ENCODE measurements at regions of chr22 and their contacts with region 1.

Region 1: DNA sequence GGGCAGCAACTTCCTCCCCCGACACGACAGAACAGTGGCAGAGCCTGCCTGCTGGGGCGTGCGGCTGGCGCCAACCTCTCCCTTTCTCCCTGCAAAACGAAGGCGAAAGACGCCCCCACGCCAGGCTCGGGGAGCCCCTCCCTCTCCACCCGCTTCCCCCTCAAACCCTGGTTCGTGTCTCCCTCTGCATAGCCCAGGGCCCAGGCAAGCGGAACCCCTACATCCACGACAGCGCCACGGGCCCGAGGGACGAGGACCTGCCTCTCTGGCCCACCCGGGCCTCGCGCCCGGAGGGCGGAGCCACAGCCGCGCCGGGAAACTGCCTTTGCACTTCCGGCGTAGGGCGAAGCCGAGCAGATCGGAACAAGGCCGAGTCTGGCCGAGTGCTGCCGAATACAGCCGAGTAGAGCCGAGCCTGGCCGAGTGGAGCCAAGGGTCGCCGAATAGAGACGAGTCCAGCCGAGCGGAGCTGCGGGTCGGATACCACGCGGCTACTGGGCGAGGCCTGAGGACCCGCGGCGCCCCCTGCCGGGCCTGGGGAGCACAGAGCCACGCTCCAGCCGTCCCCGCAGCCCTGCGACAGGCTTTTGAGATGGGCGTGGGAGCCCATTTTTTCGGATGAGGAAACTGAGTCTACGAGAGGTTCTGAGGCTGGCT is 11.2 kb upstream of the C1QTNF6 start:
- DNase-seq: peak; percentile 96 to 100 (median 99)
- ATAC-seq: peak; percentile 92
- H3K4me3 ChIP-seq: peak overlapping the region; percentile 57 to 73
- H3K4me3 Mint-ChIP-seq: peak overlapping the region; percentile 85
- H3K27ac ChIP-seq: peak overlapping the region; percentile 67 to 95
- H3K27ac Mint-ChIP-seq: peak overlapping the region; percentile 95
- H3K4me1 ChIP-seq: peaks cover 61% of the 10 kb centered on the region
- H3K4me1 Mint-ChIP-seq: peaks cover 70% of the 10 kb centered on the region
- H3K27me3 ChIP-seq: no peaks in the 10 kb centered on the region
- H3K27me3 Mint-ChIP-seq: no peaks in the 10 kb centered on the region
- CTCF ChIP-seq: peak; percentile 87

Region 2: GRCh38 chr22:36775964-36776669 is 423.1 kb before region 1 on chr22 and contains the start of gene IFT27:
- CTCF ChIA-PET with region 1: interaction called, 3 read pairs
- POLR2A ChIA-PET with region 1: no interaction called
- intact Hi-C with region 1: loop called in 1 of 2 experiments (anchors 2 kb)
- DNase-seq: peak; percentile 89 to 100 (median 95)
- ATAC-seq: peak; percentile 84
- H3K4me3 ChIP-seq: peak within 1 kb of the TSS; percentile 72 to 73
- H3K4me3 Mint-ChIP-seq: peak within 1 kb of the TSS; percentile 93
- H3K27ac ChIP-seq: peak within 1 kb of the TSS; percentile 89 to 92
- H3K27ac Mint-ChIP-seq: peak within 1 kb of the TSS; percentile 94
- H3K4me1 ChIP-seq: peaks cover 14% of the 10 kb centered on the region
- H3K4me1 Mint-ChIP-seq: peaks cover 29% of the 10 kb centered on the region
- H3K27me3 ChIP-seq: no peaks in the 10 kb centered on the region
- H3K27me3 Mint-ChIP-seq: no peaks in the 10 kb centered on the region
- CTCF ChIP-seq: no peak
- total RNA-seq, gene IFT27: 9.2 to 9.9 TPM

Region 3: GRCh38 chr22:36977947-36978660 is 221.1 kb before region 1 on chr22:
- CTCF ChIA-PET with region 1: interaction called, 9 read pairs
- POLR2A ChIA-PET with region 1: no interaction called
- intact Hi-C with region 1: loop called (anchors 1 to 5 kb)
- DNase-seq: peak; percentile 78 to 95 (median 91)
- ATAC-seq: peak; percentile 90
- H3K4me3 ChIP-seq: peak overlapping the region; percentile 50 to 70
- H3K4me3 Mint-ChIP-seq: peak overlapping the region; percentile 97
- H3K27ac ChIP-seq: peak overlapping the region; percentile 64 to 70
- H3K27ac Mint-ChIP-seq: peak overlapping the region; percentile 95
- H3K4me1 ChIP-seq: peaks cover 4% of the 10 kb centered on the region
- H3K4me1 Mint-ChIP-seq: peaks cover 6% of the 10 kb centered on the region
- H3K27me3 ChIP-seq: no peaks in the 10 kb centered on the region
- H3K27me3 Mint-ChIP-seq: no peaks in the 10 kb centered on the region
- CTCF ChIP-seq: peak; percentile 69

Region 4: DNA sequence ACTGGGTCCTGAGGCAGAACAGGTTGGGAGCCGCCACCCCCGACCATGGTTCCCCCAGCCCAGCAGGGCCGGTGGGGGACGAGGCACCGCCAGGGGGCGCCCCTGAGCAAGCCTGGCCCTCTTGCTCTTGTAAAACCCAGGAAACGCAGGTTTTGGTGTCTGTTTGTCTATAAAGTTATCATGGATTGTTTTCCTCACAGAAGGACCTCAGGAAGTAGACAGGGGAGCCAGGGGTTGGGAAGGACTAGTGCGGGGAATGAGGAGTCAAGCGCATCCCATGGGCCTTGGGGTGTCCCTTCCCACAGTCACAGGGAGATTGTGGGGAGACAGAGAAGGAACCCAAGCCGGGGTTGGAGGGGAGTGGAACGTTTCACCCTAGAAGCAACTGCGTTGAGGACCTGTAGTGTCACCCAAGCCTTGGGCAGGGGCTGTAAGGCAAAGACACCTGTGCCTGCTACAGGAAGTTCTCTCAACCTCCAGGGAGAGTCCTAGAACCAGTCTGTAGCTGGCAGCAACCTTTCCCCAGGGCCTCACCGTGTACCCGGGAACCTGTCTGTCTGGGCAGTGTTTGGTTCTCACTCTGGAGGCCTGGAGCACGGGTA is 121.2 kb before region 1 on chr22:
- CTCF ChIA-PET with region 1: interaction called, 10 read pairs
- POLR2A ChIA-PET with region 1: interaction called, 11 read pairs
- intact Hi-C with region 1: loop called (anchors 1 kb)
- DNase-seq: peak; percentile 68 to 93 (median 83)
- ATAC-seq: peak; percentile 14
- H3K4me3 ChIP-seq: no peak overlapping the region
- H3K4me3 Mint-ChIP-seq: peak overlapping the region; percentile 47
- H3K27ac ChIP-seq: peak overlapping the region in 1 of 2 experiments; percentile 51
- H3K27ac Mint-ChIP-seq: peak overlapping the region; percentile 99
- H3K4me1 ChIP-seq: peaks cover 39% of the 10 kb centered on the region
- H3K4me1 Mint-ChIP-seq: peaks cover 31% of the 10 kb centered on the region
- H3K27me3 ChIP-seq: no peaks in the 10 kb centered on the region
- H3K27me3 Mint-ChIP-seq: peaks cover 3% of the 10 kb centered on the region
- CTCF ChIP-seq: peak; percentile 98

Region 5: DNA sequence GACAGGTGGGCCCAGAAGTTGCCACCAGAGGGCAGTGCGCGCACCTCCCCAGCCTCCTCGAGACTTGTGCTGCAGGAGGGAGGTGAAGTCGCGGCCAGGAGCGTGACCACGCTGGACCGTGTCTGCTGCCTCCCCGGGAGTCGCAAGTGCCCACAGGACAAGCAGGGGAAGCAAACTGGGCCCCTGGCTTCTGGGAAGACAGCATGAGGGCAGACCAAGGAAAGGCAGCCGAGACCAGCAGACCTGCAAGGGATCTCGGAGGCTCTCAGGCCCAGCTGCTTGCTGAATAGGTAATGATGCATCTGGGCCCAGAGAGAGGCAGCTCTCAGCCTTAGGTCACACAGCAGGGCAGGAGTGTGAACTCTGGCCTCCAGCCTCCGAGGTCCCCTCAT is 32.6 kb before region 1 on chr22:
- CTCF ChIA-PET with region 1: interaction called, 41 read pairs
- POLR2A ChIA-PET with region 1: interaction called, 10 read pairs
- intact Hi-C with region 1: loop called (anchors 1 kb)
- DNase-seq: peak; percentile 73 to 92 (median 86)
- ATAC-seq: peak; percentile 43
- H3K4me3 ChIP-seq: peak overlapping the region; percentile 42 to 60
- H3K4me3 Mint-ChIP-seq: peak overlapping the region; percentile 91
- H3K27ac ChIP-seq: peak overlapping the region; percentile 49 to 75
- H3K27ac Mint-ChIP-seq: peak overlapping the region; percentile 94
- H3K4me1 ChIP-seq: peaks cover 88% of the 10 kb centered on the region
- H3K4me1 Mint-ChIP-seq: peaks cover 96% of the 10 kb centered on the region
- H3K27me3 ChIP-seq: no peaks in the 10 kb centered on the region
- H3K27me3 Mint-ChIP-seq: no peaks in the 10 kb centered on the region
- CTCF ChIP-seq: peak; percentile 91

Region 6: GRCh38 chr22:37210041-37210803 is 11.0 kb after region 1 on chr22:
- CTCF ChIA-PET with region 1: interaction called, 59 read pairs
- POLR2A ChIA-PET with region 1: interaction called, 5 read pairs
- intact Hi-C with region 1: no loop called
- DNase-seq: peak in 3 of 9 experiments; percentile 3 to 48 (median 6)
- ATAC-seq: no peak
- H3K4me3 ChIP-seq: no peak overlapping the region
- H3K4me3 Mint-ChIP-seq: no peak overlapping the region
- H3K27ac ChIP-seq: no peak overlapping the region
- H3K27ac Mint-ChIP-seq: peak overlapping the region; percentile 83
- H3K4me1 ChIP-seq: peaks cover 62% of the 10 kb centered on the region
- H3K4me1 Mint-ChIP-seq: peaks cover 66% of the 10 kb centered on the region
- H3K27me3 ChIP-seq: no peaks in the 10 kb centered on the region
- H3K27me3 Mint-ChIP-seq: no peaks in the 10 kb centered on the region
- CTCF ChIP-seq: no peak

Region 7: GRCh38 chr22:37237371-37238268 is 38.4 kb after region 1 on chr22:
- CTCF ChIA-PET with region 1: interaction called, 89 read pairs
- POLR2A ChIA-PET with region 1: interaction called, 32 read pairs
- intact Hi-C with region 1: loop called in 1 of 2 experiments (anchors 1 kb)
- DNase-seq: peak in 6 of 9 experiments; percentile 23 to 70 (median 52)
- ATAC-seq: peak; percentile 20
- H3K4me3 ChIP-seq: peak overlapping the region; percentile 39 to 50
- H3K4me3 Mint-ChIP-seq: peak overlapping the region; percentile 82
- H3K27ac ChIP-seq: peak overlapping the region; percentile 59 to 81
- H3K27ac Mint-ChIP-seq: peak overlapping the region; percentile 100
- H3K4me1 ChIP-seq: peaks cover 97% of the 10 kb centered on the region
- H3K4me1 Mint-ChIP-seq: peaks cover 98% of the 10 kb centered on the region
- H3K27me3 ChIP-seq: no peaks in the 10 kb centered on the region
- H3K27me3 Mint-ChIP-seq: no peaks in the 10 kb centered on the region
- CTCF ChIP-seq: no peak